ENCODE measurements at regions of chr1 and their contacts with region 1.

Region 1: DNA sequence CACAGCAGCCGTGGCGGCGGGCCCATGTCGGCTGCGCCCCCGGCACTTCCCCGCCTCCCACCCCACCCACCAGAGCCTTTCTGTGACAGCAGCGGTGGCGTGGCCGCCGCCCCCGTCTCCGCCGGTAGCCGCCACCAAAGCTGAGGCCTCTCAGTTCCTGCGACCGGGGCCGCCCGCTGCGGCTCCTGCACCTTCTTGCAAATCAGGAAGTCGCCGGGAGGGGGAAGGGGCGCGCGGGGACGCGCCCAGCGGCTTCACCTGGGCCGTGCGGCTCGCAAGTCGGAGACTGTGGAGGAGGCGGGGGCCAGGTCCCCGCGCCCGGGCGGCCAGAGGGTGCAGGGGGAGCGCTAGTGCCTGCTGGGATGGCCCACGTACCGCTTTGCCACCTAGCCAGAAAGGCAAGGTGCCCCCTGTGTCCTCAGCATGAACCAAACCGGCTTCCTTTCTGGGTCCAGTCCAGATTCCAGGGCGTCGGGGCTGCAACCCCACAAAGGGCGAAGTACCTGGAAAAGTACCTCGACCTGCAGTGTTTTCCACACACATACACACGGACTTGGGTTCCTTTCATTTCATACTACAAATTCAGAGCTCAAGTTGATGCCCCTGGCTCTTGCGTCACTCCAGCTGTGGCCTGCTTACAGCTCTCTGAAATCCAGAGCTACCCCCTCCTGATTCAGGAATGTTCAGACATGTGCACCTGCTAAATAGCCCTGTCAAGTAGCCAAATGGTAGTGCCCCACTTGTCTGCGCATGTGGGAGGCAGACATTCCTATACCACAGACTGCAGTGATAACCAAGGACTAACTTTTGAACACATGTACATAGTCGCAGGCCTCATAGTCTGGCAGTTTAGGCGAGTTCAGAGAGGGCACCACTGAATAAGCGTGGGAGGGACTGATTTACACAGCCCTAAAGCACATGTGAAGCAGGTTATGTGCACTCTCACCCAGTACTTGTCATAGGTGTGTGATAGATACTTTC is at the start of gene DENND1B:
- DNase-seq: peak; percentile 64 to 94 (median 80)
- ATAC-seq: peak; percentile 65
- H3K4me3 ChIP-seq: peak within 1 kb of the TSS; percentile 69
- H3K4me3 Mint-ChIP-seq: peak within 1 kb of the TSS; percentile 94
- H3K27ac ChIP-seq: peak within 1 kb of the TSS; percentile 65 to 82
- H3K27ac Mint-ChIP-seq: peak within 1 kb of the TSS; percentile 89
- H3K4me1 ChIP-seq: peaks cover 32% of the 10 kb centered on the region
- H3K4me1 Mint-ChIP-seq: peaks cover 72% of the 10 kb centered on the region
- H3K27me3 ChIP-seq: no peaks in the 10 kb centered on the region
- H3K27me3 Mint-ChIP-seq: no peaks in the 10 kb centered on the region
- CTCF ChIP-seq: peak; percentile 15
- total RNA-seq, gene DENND1B: 23.9 to 26.5 TPM

Region 2: GRCh38 chr1:197577580-197577979 is 198.0 kb before region 1 on chr1:
- CTCF ChIA-PET with region 1: no interaction called
- POLR2A ChIA-PET with region 1: no interaction called
- intact Hi-C with region 1: no loop called
- DNase-seq: no peak
- ATAC-seq: no peak
- H3K4me3 ChIP-seq: no peak overlapping the region
- H3K4me3 Mint-ChIP-seq: no peak overlapping the region
- H3K27ac ChIP-seq: no peak overlapping the region
- H3K27ac Mint-ChIP-seq: no peak overlapping the region
- H3K4me1 ChIP-seq: no peaks in the 10 kb centered on the region
- H3K4me1 Mint-ChIP-seq: no peaks in the 10 kb centered on the region
- H3K27me3 ChIP-seq: no peaks in the 10 kb centered on the region
- H3K27me3 Mint-ChIP-seq: no peaks in the 10 kb centered on the region
- CTCF ChIP-seq: no peak

Region 3: DNA sequence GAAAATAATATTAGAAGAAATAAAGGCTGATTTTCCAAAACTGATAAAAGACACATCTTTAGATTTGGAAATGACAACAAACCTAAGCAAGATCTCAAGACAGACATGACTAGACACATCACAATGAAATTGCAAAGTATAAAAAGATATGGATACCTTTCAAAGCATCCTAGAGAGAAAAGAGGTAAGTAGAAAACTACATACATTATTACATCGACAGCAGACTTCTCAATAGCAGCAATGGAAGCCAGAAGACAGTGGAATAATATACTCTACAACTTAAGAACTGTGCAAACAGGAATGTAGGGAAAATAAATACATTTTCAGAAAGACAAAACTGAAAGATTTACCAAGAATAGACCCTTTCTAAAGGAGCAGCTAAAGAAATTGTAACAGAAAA is 50.5 kb before region 1 on chr1:
- CTCF ChIA-PET with region 1: no interaction called
- POLR2A ChIA-PET with region 1: no interaction called
- intact Hi-C with region 1: no loop called
- DNase-seq: peak in 1 of 14 experiments; percentile 2
- ATAC-seq: no peak
- H3K4me3 ChIP-seq: no peak overlapping the region
- H3K4me3 Mint-ChIP-seq: no peak overlapping the region
- H3K27ac ChIP-seq: no peak overlapping the region
- H3K27ac Mint-ChIP-seq: no peak overlapping the region
- H3K4me1 ChIP-seq: no peaks in the 10 kb centered on the region
- H3K4me1 Mint-ChIP-seq: no peaks in the 10 kb centered on the region
- H3K27me3 ChIP-seq: no peaks in the 10 kb centered on the region
- H3K27me3 Mint-ChIP-seq: no peaks in the 10 kb centered on the region
- CTCF ChIP-seq: no peak

Region 4: GRCh38 chr1:197761621-197762020 is 14.0 kb before region 1 on chr1:
- CTCF ChIA-PET with region 1: interaction called, 4 read pairs
- POLR2A ChIA-PET with region 1: interaction called, 12 read pairs
- intact Hi-C with region 1: loop called in 1 of 2 experiments (anchors 2 kb)
- DNase-seq: no peak
- ATAC-seq: peak; percentile 21
- H3K4me3 ChIP-seq: no peak overlapping the region
- H3K4me3 Mint-ChIP-seq: no peak overlapping the region
- H3K27ac ChIP-seq: no peak overlapping the region
- H3K27ac Mint-ChIP-seq: no peak overlapping the region
- H3K4me1 ChIP-seq: peaks cover 3% of the 10 kb centered on the region
- H3K4me1 Mint-ChIP-seq: peaks cover 70% of the 10 kb centered on the region
- H3K27me3 ChIP-seq: no peaks in the 10 kb centered on the region
- H3K27me3 Mint-ChIP-seq: no peaks in the 10 kb centered on the region
- CTCF ChIP-seq: no peak

Region 5: GRCh38 chr1:197799271-197799670 is 23.7 kb after region 1 on chr1:
- CTCF ChIA-PET with region 1: no interaction called
- POLR2A ChIA-PET with region 1: no interaction called
- intact Hi-C with region 1: no loop called
- DNase-seq: no peak
- ATAC-seq: no peak
- H3K4me3 ChIP-seq: no peak overlapping the region
- H3K4me3 Mint-ChIP-seq: no peak overlapping the region
- H3K27ac ChIP-seq: no peak overlapping the region
- H3K27ac Mint-ChIP-seq: no peak overlapping the region
- H3K4me1 ChIP-seq: no peaks in the 10 kb centered on the region
- H3K4me1 Mint-ChIP-seq: no peaks in the 10 kb centered on the region
- H3K27me3 ChIP-seq: peaks cover 0 to 2% of the 10 kb centered on the region in 2 experiments
- H3K27me3 Mint-ChIP-seq: no peaks in the 10 kb centered on the region
- CTCF ChIP-seq: no peak

Region 6: GRCh38 chr1:197902454-197903195 is 127.1 kb after region 1 on chr1 and contains the start of gene C1orf53:
- CTCF ChIA-PET with region 1: no interaction called
- POLR2A ChIA-PET with region 1: interaction called, 15 read pairs
- intact Hi-C with region 1: no loop called
- DNase-seq: peak; percentile 40 to 87 (median 66)
- ATAC-seq: peak; percentile 89
- H3K4me3 ChIP-seq: peak within 1 kb of the TSS; percentile 59
- H3K4me3 Mint-ChIP-seq: peak within 1 kb of the TSS; percentile 97
- H3K27ac ChIP-seq: peak within 1 kb of the TSS in 1 of 2 donors; percentile 30
- H3K27ac Mint-ChIP-seq: peak within 1 kb of the TSS; percentile 79
- H3K4me1 ChIP-seq: peaks cover 11% of the 10 kb centered on the region
- H3K4me1 Mint-ChIP-seq: peaks cover 14% of the 10 kb centered on the region
- H3K27me3 ChIP-seq: peaks cover 18 to 48% of the 10 kb centered on the region in 2 experiments
- H3K27me3 Mint-ChIP-seq: peaks cover 54% of the 10 kb centered on the region
- CTCF ChIP-seq: no peak
- total RNA-seq, gene C1orf53: not detected

Region 7: GRCh38 chr1:197915862-197916499 is 140.4 kb after region 1 on chr1:
- CTCF ChIA-PET with region 1: no interaction called
- POLR2A ChIA-PET with region 1: no interaction called
- intact Hi-C with region 1: loop called (anchors 5 kb)
- DNase-seq: peak in 3 of 14 experiments; percentile 11 to 33 (median 30)
- ATAC-seq: no peak
- H3K4me3 ChIP-seq: no peak overlapping the region
- H3K4me3 Mint-ChIP-seq: peak overlapping the region; percentile 35
- H3K27ac ChIP-seq: no peak overlapping the region
- H3K27ac Mint-ChIP-seq: no peak overlapping the region
- H3K4me1 ChIP-seq: peaks cover 85% of the 10 kb centered on the region
- H3K4me1 Mint-ChIP-seq: peaks cover 94% of the 10 kb centered on the region
- H3K27me3 ChIP-seq: peaks cover 99 to 100% of the 10 kb centered on the region in 2 experiments
- H3K27me3 Mint-ChIP-seq: peaks cover 100% of the 10 kb centered on the region
- CTCF ChIP-seq: no peak

Region 8: GRCh38 chr1:198175423-198176170 is 400.0 kb after region 1 on chr1:
- CTCF ChIA-PET with region 1: no interaction called
- POLR2A ChIA-PET with region 1: no interaction called
- intact Hi-C with region 1: loop called in 1 of 2 experiments (anchors 10 kb)
- DNase-seq: peak in 4 of 14 experiments; percentile 38 to 72 (median 70)
- ATAC-seq: peak; percentile 82
- H3K4me3 ChIP-seq: no peak overlapping the region
- H3K4me3 Mint-ChIP-seq: peak overlapping the region; percentile 75
- H3K27ac ChIP-seq: peak overlapping the region; percentile 46 to 54
- H3K27ac Mint-ChIP-seq: peak overlapping the region; percentile 91
- H3K4me1 ChIP-seq: peaks cover 37% of the 10 kb centered on the region
- H3K4me1 Mint-ChIP-seq: peaks cover 88% of the 10 kb centered on the region
- H3K27me3 ChIP-seq: no peaks in the 10 kb centered on the region
- H3K27me3 Mint-ChIP-seq: no peaks in the 10 kb centered on the region
- CTCF ChIP-seq: no peak